PC-9 (cell line): ENCODE measurements at regions of chrX and their contacts with region 1.

Region 1: GRCh38 chrX:154478728-154479622 is at the start of gene LAGE3:
- DNase-seq: peak; percentile 73 to 99
- H3K4me3 ChIP-seq: peak within 1 kb of the TSS; percentile 60; the same call in 1 of the 2 replicates
- H3K27ac ChIP-seq: no peak within 1 kb of the TSS
- H3K4me1 ChIP-seq: peaks cover under 1% of the 10 kb centered on the region
- H3K27me3 ChIP-seq: no peaks in the 10 kb centered on the region
- CTCF ChIP-seq: no peak
- total RNA-seq, gene LAGE3: 63.9 and 82.5 TPM in 2 replicates

Region 2: DNA sequence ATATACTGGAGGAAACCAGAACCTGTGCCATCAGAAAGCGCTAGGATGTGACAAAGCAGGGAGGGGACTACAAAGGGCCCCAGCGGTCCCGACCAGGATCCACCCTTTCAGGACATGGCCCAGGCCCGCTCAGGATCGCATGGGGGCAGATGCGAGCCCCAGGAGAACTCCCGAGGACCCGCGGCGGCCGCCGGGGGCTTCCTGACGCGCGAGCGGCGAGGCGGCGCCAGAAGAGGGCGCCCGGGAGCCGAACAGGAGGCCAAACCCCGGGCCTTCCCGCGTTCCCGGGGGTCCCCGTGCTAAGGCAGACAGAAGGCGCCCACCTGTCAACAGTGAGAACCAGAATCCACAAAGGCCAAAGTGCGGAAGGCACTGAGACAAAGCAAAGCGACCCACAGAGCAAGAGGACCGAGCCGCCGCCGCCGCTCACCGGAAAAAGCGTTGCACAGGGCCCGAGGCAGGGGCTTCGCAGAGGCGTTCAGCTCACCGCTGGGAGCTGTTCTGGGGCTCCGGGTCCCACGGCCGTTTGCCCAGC is 342.3 kb before region 1 on chrX:
- CTCF ChIA-PET with region 1: no interaction called
- POLR2A ChIA-PET with region 1: no interaction called
- intact Hi-C with region 1: no loop called
- DNase-seq: peak; percentile 42 to 73
- H3K4me3 ChIP-seq: no peak overlapping the region
- H3K27ac ChIP-seq: no peak overlapping the region
- H3K4me1 ChIP-seq: no peaks in the 10 kb centered on the region
- H3K27me3 ChIP-seq: no peaks in the 10 kb centered on the region
- CTCF ChIP-seq: peak; percentile 81

Region 3: DNA sequence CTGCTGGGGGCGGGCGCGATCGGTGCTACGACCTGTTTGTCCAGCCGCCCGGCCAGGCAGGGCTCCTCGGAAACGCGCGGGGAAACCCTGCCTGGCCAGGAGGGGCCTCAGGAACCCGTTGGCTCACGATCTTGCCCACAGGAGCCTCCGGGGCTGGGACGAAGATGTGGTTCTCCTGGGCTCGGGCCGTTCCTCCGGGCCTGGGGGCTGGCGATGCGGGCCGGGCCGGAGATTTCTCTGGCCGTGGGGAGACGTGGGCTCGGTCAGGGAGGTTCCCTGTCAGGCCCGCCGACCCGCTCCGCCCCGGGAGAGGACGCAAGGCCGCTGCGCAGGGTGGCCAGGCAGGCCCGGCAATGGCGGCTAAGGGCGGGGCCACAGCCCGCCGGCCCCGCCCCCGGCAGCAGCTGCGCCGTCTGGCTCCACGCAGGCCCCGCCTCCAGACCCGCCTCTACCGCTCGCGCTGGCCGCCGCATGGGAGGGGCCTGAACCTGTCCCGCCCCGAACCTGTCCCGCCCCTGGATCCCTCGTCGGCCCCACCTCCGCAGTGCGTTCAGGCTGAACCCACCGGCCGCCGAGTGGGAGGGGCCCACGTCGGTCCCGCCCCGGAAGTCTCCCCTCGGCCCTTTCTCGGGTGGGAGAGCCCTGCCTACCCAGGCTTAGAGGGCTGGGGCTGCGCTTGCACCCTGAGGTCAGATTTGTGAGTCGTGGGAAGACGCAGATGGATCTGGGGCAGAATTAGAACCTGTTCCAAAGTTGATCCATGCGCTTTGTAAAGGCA is 37.1 kb after region 1 on chrX and contains the start of gene FAM3A:
- CTCF ChIA-PET with region 1: no interaction called
- POLR2A ChIA-PET with region 1: interaction called, 12 read pairs
- intact Hi-C with region 1: no loop called
- DNase-seq: peak; percentile 61 to 97
- H3K4me3 ChIP-seq: peak within 1 kb of the TSS; percentile 72
- H3K27ac ChIP-seq: peak within 1 kb of the TSS; percentile 46
- H3K4me1 ChIP-seq: no peaks in the 10 kb centered on the region
- H3K27me3 ChIP-seq: no peaks in the 10 kb centered on the region
- CTCF ChIP-seq: no peak
- total RNA-seq, gene FAM3A: 60.3 and 69.3 TPM in 2 replicates

Region 4: GRCh38 chrX:154526901-154527675 is 48.1 kb after region 1 on chrX:
- CTCF ChIA-PET with region 1: no interaction called
- POLR2A ChIA-PET with region 1: interaction called, 10 read pairs
- intact Hi-C with region 1: loop called (anchors 2 kb)
- DNase-seq: peak; percentile 63 to 83
- H3K4me3 ChIP-seq: no peak overlapping the region; the same call in 1 of the 2 replicates
- H3K27ac ChIP-seq: peak overlapping the region; percentile 52
- H3K4me1 ChIP-seq: peaks cover 25% of the 10 kb centered on the region
- H3K27me3 ChIP-seq: no peaks in the 10 kb centered on the region
- CTCF ChIP-seq: peak; percentile 61